ENCODE measurements at regions of chr1 and their contacts with region 1.

Region 1: GRCh38 chr1:198486903-198487302 is 53.6 kb downstream of the ATP6V1G3 start:
- DNase-seq: no peak
- H3K4me3 ChIP-seq: no peak overlapping the region
- H3K27ac ChIP-seq: no peak overlapping the region
- H3K4me1 ChIP-seq: no peaks in the 10 kb centered on the region
- H3K27me3 ChIP-seq: no peaks in the 10 kb centered on the region
- CTCF ChIP-seq: no peak
- POLR2A ChIP-seq: no peak

Region 2: DNA sequence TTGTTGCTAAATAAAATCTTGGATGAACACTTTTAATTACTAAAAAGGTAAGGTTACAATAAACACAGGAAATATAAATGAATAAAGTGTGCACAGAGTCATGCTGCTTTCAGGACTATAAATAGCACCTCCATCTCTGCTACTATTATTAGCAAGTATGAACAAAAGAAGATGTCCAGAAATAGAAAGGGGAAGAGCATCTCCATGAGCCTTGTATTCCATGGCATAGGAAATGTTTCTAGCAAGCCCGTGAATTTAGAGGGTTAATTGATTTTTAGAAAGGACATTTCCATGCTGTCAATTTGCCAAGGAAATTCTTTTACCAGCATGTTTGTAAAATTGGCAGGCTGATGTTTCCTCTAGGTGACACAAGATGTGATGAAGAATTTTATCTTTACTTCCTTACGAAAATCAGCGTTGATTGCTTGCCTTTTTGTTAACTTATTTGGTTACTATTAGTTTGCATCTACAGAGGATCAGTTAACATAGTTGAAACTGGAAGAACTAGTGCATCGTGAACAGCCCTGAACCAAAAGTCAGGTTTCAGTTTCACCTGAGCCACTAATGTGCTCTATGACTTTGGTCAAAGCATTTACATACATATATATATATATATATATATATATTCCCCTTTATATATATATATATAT is 1585.9 kb after region 1 on chr1:
- intact Hi-C with region 1: loop called (anchors 5 kb)
- DNase-seq: no peak
- H3K4me3 ChIP-seq: no peak overlapping the region
- H3K27ac ChIP-seq: peak overlapping the region; percentile 22
- H3K4me1 ChIP-seq: no peaks in the 10 kb centered on the region
- H3K27me3 ChIP-seq: no peaks in the 10 kb centered on the region
- CTCF ChIP-seq: no peak
- POLR2A ChIP-seq: no peak

Measured in vagina (tissue), 2 donors.